CD4-positive, alpha-beta T cell (primary cell): ENCODE measurements at regions of chr6 and their contacts with region 1.

Region 1: GRCh38 chr6:109073344-109074132 is 21.1 kb downstream of the SESN1 start:
- DNase-seq: peak in 11 of 14 experiments; percentile 17 to 87 (median 37)
- ATAC-seq: peak; percentile 74
- H3K4me3 ChIP-seq: no peak overlapping the region
- H3K4me3 Mint-ChIP-seq: peak overlapping the region; percentile 0
- H3K27ac ChIP-seq: no peak overlapping the region
- H3K27ac Mint-ChIP-seq: no peak overlapping the region
- H3K4me1 ChIP-seq: peaks cover 8% of the 10 kb centered on the region
- H3K4me1 Mint-ChIP-seq: peaks cover 25% of the 10 kb centered on the region
- H3K27me3 ChIP-seq: no peaks in the 10 kb centered on the region
- H3K27me3 Mint-ChIP-seq: no peaks in the 10 kb centered on the region
- CTCF ChIP-seq: peak; percentile 85

Region 2: GRCh38 chr6:108782179-108783041 is 291.1 kb before region 1 on chr6:
- CTCF ChIA-PET with region 1: no interaction called
- POLR2A ChIA-PET with region 1: no interaction called
- intact Hi-C with region 1: loop called (anchors 1 to 2 kb)
- DNase-seq: peak; percentile 69 to 89 (median 75)
- ATAC-seq: peak; percentile 100
- H3K4me3 ChIP-seq: peak overlapping the region; percentile 45
- H3K4me3 Mint-ChIP-seq: peak overlapping the region; percentile 87
- H3K27ac ChIP-seq: no peak overlapping the region
- H3K27ac Mint-ChIP-seq: no peak overlapping the region
- H3K4me1 ChIP-seq: peaks cover 11% of the 10 kb centered on the region
- H3K4me1 Mint-ChIP-seq: peaks cover 11% of the 10 kb centered on the region
- H3K27me3 ChIP-seq: no peaks in the 10 kb centered on the region
- H3K27me3 Mint-ChIP-seq: no peaks in the 10 kb centered on the region
- CTCF ChIP-seq: peak; percentile 86

Region 3: GRCh38 chr6:108914235-108915022 is 159.1 kb before region 1 on chr6:
- CTCF ChIA-PET with region 1: interaction called, 4 read pairs
- POLR2A ChIA-PET with region 1: no interaction called
- intact Hi-C with region 1: loop called in 1 of 2 experiments (anchors 10 kb)
- DNase-seq: peak in 12 of 14 experiments; percentile 4 to 72 (median 26)
- ATAC-seq: peak; percentile 57
- H3K4me3 ChIP-seq: no peak overlapping the region
- H3K4me3 Mint-ChIP-seq: no peak overlapping the region
- H3K27ac ChIP-seq: no peak overlapping the region
- H3K27ac Mint-ChIP-seq: no peak overlapping the region
- H3K4me1 ChIP-seq: no peaks in the 10 kb centered on the region
- H3K4me1 Mint-ChIP-seq: no peaks in the 10 kb centered on the region
- H3K27me3 ChIP-seq: no peaks in the 10 kb centered on the region
- H3K27me3 Mint-ChIP-seq: no peaks in the 10 kb centered on the region
- CTCF ChIP-seq: peak; percentile 57

Region 4: DNA sequence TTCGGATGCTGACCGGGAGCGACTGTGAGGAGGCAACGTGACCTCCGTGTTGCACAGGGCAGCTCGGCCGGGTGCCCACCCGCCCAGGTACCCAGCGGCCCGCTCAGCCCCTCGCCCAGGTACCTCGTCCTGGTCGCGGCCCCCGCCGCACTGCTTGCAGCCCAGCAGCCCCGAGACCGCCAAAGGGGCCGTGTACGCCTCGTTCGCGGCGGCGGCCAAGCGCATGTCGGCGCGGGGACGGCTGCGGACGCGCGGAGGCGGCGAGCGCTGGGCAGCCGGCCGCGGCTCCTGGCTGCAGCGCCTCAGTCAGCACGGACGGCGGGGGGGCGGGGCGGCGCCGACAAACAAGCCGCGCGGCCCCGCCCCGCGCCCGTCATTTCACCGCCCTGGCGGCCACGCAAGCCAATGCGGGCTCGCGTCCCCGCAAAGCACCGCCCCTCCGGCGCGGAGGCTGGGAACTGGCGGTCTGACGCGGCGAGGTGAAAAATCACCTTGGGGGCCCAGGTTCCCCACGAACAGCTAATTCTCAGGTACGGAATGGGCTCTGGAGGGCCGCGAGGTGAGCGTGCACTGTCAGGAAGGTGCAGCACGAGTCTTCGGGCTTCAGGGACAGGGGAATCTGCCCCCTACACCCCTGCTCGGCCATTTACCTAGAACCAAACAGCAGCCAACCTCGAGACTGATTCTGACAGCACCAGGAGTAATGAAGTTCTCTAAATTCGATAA is 64.1 kb before region 1 on chr6:
- CTCF ChIA-PET with region 1: interaction called, 4 read pairs
- POLR2A ChIA-PET with region 1: interaction called, 43 read pairs
- intact Hi-C with region 1: loop called in 1 of 2 experiments (anchors 1 kb)
- DNase-seq: peak; percentile 81 to 97 (median 90)
- ATAC-seq: peak; percentile 94
- H3K4me3 ChIP-seq: peak overlapping the region; percentile 93
- H3K4me3 Mint-ChIP-seq: peak overlapping the region; percentile 100
- H3K27ac ChIP-seq: peak overlapping the region; percentile 84 to 92
- H3K27ac Mint-ChIP-seq: peak overlapping the region; percentile 99
- H3K4me1 ChIP-seq: peaks cover 18% of the 10 kb centered on the region
- H3K4me1 Mint-ChIP-seq: peaks cover 73% of the 10 kb centered on the region
- H3K27me3 ChIP-seq: no peaks in the 10 kb centered on the region
- H3K27me3 Mint-ChIP-seq: no peaks in the 10 kb centered on the region
- CTCF ChIP-seq: peak; percentile 14

Region 5: GRCh38 chr6:109036574-109037294 is 36.8 kb before region 1 on chr6:
- CTCF ChIA-PET with region 1: interaction called, 3 read pairs
- POLR2A ChIA-PET with region 1: interaction called, 13 read pairs
- intact Hi-C with region 1: no loop called
- DNase-seq: peak in 3 of 14 experiments; percentile 40 to 75 (median 44)
- ATAC-seq: peak; percentile 51
- H3K4me3 ChIP-seq: no peak overlapping the region
- H3K4me3 Mint-ChIP-seq: peak overlapping the region; percentile 31
- H3K27ac ChIP-seq: peak overlapping the region in 1 of 2 donors; percentile 38
- H3K27ac Mint-ChIP-seq: peak overlapping the region; percentile 71
- H3K4me1 ChIP-seq: peaks cover 22% of the 10 kb centered on the region
- H3K4me1 Mint-ChIP-seq: peaks cover 63% of the 10 kb centered on the region
- H3K27me3 ChIP-seq: no peaks in the 10 kb centered on the region
- H3K27me3 Mint-ChIP-seq: no peaks in the 10 kb centered on the region
- CTCF ChIP-seq: no peak